ENCODE measurements at regions of chr2 and their contacts with region 1.

Region 1: DNA sequence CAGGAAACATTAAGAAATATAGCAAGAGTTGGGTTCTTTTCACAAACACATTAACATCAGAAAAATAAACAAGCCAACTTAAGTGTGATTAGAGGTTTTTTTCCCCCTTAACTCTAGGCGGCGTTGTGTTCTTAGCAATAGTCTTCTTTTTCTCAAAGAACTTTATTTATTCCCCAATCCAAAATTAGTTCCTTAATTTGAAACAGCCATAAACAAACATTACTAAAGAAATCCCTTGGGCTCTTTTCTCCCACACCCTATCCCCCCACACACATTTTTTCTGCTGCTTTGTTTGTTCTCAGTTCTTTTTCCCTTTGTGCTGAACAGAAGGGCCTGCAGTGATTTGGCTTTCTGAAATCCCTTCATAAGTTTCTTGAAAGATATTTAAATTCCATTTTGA is 13.2 kb upstream of the MYO1B start:
- DNase-seq: no peak
- H3K4me3 ChIP-seq: no peak overlapping the region
- H3K27ac ChIP-seq: peak overlapping the region; percentile 29 to 47
- H3K4me1 ChIP-seq: no peaks in the 10 kb centered on the region
- H3K27me3 ChIP-seq: no peaks in the 10 kb centered on the region
- CTCF ChIP-seq: peak; percentile 50 to 73 (median 63)
- POLR2A ChIP-seq: no peak

Region 2: DNA sequence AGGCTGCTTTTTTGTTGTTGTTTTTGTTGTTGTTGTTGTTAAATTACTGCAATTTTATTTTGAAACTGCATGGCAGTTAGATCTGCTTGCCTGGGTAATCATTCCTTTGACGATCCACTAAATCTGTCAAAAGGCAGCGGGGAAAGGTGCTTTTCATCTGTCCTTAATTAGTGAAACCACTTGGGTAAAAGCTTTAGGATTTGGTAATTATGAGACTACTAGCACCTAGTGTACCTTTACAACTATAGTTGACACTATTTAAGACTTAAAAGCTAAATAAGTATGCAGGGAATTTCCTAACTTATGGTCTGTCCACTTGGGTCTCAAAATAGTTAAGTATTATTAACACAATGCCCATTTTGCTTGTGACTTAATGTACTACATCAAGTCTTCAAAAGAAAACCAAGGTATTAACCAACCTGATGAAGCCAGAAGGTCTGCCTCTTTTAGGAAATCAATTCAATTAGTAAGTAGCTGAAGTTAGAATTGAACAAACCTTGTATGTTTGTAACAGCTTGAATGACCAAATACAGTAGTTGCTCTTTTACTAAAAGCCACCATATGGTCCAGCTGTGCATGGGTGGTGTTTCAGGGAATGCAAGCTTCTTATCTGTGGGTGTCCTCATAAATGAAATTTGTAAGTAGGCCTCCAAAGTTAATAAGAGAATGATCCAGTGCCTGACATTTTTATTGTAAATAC is 538.3 kb before region 1 on chr2:
- intact Hi-C with region 1: no loop called
- DNase-seq: no peak
- H3K4me3 ChIP-seq: no peak overlapping the region
- H3K27ac ChIP-seq: no peak overlapping the region
- H3K4me1 ChIP-seq: no peaks in the 10 kb centered on the region
- H3K27me3 ChIP-seq: no peaks in the 10 kb centered on the region
- CTCF ChIP-seq: no peak
- POLR2A ChIP-seq: no peak

Region 3: GRCh38 chr2:191501561-191502168 is 269.7 kb after region 1 on chr2:
- intact Hi-C with region 1: loop called (anchors 10 kb)
- DNase-seq: no peak
- H3K4me3 ChIP-seq: no peak overlapping the region
- H3K27ac ChIP-seq: peak overlapping the region in 1 of 2 donors; percentile 32
- H3K4me1 ChIP-seq: no peaks in the 10 kb centered on the region
- H3K27me3 ChIP-seq: no peaks in the 10 kb centered on the region
- CTCF ChIP-seq: peak; percentile 46 to 72 (median 58)
- POLR2A ChIP-seq: no peak